SK-N-SH (cell line): ENCODE measurements at regions of chr11 and their contacts with region 1.

Region 1: GRCh38 chr11:114262681-114263512 is 33.3 kb upstream of the NNMT start:
- DNase-seq: peak; percentile 75
- H3K4me3 ChIP-seq: peak overlapping the region in 1 of 2 experiments; percentile 27; a peak in 1 of 4 replicates
- H3K27ac ChIP-seq: no peak overlapping the region
- H3K4me1 ChIP-seq: no peaks in the 10 kb centered on the region; a peak in 1 of 4 replicates
- H3K27me3 ChIP-seq: peaks cover 14% of the 10 kb centered on the region; the same call in 1 of the 2 replicates
- CTCF ChIP-seq: peak; percentile 73
- EP300 ChIP-seq: no peak
- RAD21 ChIP-seq: peak; percentile 95

Region 2: DNA sequence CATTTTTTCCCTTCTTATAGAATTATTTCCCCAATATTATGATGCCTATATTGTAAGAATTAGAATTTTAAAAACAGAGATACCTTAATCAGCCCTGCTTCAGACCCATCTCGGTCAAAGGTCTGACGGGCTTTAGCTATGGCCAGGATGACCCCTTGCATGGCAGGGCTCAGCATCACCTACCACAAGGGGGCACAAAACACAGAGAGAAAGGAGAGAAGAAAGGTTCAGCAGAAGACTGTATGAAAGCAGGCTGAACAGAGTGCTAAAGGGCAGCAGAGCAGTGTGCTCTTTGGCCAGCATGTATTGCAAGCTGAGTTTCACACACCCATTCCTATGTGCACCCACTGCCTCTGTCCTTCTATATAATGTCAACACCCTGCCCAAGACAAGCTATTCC is 456.5 kb before region 1 on chr11:
- CTCF ChIA-PET with region 1: interaction called, 25 read pairs
- POLR2A ChIA-PET with region 1: no interaction called
- DNase-seq: peak; percentile 33
- H3K4me3 ChIP-seq: no peak overlapping the region; a peak in 1 of 4 replicates
- H3K27ac ChIP-seq: no peak overlapping the region
- H3K4me1 ChIP-seq: peaks cover 0 to 2% of the 10 kb centered on the region in 2 experiments; a peak in 1 of 4 replicates
- H3K27me3 ChIP-seq: no peaks in the 10 kb centered on the region
- CTCF ChIP-seq: peak; percentile 53
- EP300 ChIP-seq: no peak
- RAD21 ChIP-seq: peak; percentile 33

Region 3: GRCh38 chr11:113952588-113952987 is 310.3 kb before region 1 on chr11:
- CTCF ChIA-PET with region 1: interaction called, 13 read pairs
- POLR2A ChIA-PET with region 1: no interaction called
- DNase-seq: no peak
- H3K4me3 ChIP-seq: no peak overlapping the region
- H3K27ac ChIP-seq: no peak overlapping the region
- H3K4me1 ChIP-seq: peaks cover 0 to 15% of the 10 kb centered on the region in 2 experiments; a peak in 1 of 4 replicates
- H3K27me3 ChIP-seq: no peaks in the 10 kb centered on the region
- CTCF ChIP-seq: no peak
- EP300 ChIP-seq: no peak
- RAD21 ChIP-seq: no peak

Region 4: GRCh38 chr11:114017723-114018122 is 245.2 kb before region 1 on chr11:
- CTCF ChIA-PET with region 1: interaction called, 445 read pairs
- POLR2A ChIA-PET with region 1: no interaction called
- DNase-seq: no peak
- H3K4me3 ChIP-seq: no peak overlapping the region
- H3K27ac ChIP-seq: no peak overlapping the region
- H3K4me1 ChIP-seq: no peaks in the 10 kb centered on the region
- H3K27me3 ChIP-seq: no peaks in the 10 kb centered on the region
- CTCF ChIP-seq: no peak
- EP300 ChIP-seq: no peak
- RAD21 ChIP-seq: no peak

Region 5: DNA sequence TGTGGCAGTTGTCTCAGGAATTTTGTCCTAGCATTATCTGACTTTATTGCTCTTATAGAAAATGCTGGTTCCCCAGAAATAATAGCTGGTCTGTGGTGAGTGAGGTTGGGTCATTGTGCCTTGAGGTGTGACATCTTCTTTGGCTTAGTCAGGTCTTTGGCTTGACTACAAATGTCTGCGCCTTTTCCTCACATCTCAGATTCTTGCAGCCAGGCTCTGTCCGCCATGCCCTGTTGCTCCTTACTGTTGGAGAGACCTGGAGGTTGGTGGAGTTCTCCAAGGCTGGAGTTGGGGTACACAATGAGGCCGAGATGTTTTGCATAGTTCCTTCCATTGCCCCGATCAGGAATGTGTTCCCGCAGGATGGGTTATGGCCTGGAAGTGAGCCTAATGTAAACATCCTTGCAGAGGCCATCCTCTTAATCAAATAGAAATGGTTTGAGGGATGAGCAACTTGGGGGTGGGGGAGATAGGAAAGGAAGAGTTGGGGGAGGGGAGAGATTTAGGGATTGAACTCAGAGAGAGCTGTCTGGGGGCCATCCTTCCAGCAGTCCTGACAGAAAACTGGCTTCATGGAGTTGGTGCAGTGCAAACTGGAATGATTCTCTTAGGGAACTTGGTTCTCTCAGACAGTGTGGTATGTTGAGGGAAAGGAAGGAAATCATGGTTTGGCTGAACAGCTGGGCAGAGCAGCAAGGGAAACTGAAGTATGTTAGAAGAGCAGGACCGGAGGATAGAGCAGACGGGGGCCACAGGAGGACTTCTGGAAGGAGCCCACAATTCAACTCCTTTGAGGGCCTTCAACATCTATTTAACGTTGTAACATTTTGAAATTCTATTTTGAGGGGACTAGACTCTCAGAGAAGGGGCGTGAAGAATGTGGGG is 153.4 kb before region 1 on chr11:
- CTCF ChIA-PET with region 1: interaction called, 10 read pairs
- POLR2A ChIA-PET with region 1: no interaction called
- DNase-seq: no peak
- H3K4me3 ChIP-seq: no peak overlapping the region
- H3K27ac ChIP-seq: no peak overlapping the region
- H3K4me1 ChIP-seq: no peaks in the 10 kb centered on the region
- H3K27me3 ChIP-seq: peaks cover 36% of the 10 kb centered on the region; the same call in 1 of the 2 replicates
- CTCF ChIP-seq: no peak
- EP300 ChIP-seq: no peak
- RAD21 ChIP-seq: no peak

Region 6: DNA sequence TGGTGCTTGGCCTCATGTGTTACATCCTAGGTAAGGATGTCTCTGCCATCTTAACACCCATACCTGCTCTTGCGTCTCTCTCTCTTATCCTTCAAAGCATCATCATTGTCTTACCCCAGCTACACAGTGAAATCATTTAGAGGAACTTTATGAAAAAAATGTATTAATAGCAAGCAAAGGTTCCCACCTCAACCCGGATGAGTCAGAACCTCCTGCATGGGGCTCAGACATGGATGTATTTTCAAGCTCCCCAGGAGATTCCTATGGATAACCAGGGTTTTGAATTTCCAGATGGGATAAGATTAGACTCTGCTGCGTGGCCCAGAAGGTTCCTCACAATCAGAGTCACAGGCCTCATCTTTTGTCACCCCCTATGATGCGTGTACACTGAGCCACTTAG is 55.8 kb before region 1 on chr11:
- CTCF ChIA-PET with region 1: interaction called, 14 read pairs
- POLR2A ChIA-PET with region 1: no interaction called
- DNase-seq: no peak
- H3K4me3 ChIP-seq: no peak overlapping the region
- H3K27ac ChIP-seq: no peak overlapping the region
- H3K4me1 ChIP-seq: no peaks in the 10 kb centered on the region
- H3K27me3 ChIP-seq: peaks cover 19% of the 10 kb centered on the region
- CTCF ChIP-seq: no peak
- EP300 ChIP-seq: no peak
- RAD21 ChIP-seq: no peak

Region 7: GRCh38 chr11:114250993-114251814 is 11.7 kb before region 1 on chr11:
- CTCF ChIA-PET with region 1: interaction called, 100 read pairs
- POLR2A ChIA-PET with region 1: no interaction called
- DNase-seq: peak; percentile 21
- H3K4me3 ChIP-seq: no peak overlapping the region
- H3K27ac ChIP-seq: no peak overlapping the region
- H3K4me1 ChIP-seq: no peaks in the 10 kb centered on the region
- H3K27me3 ChIP-seq: peaks cover 11% of the 10 kb centered on the region; the same call in 1 of the 2 replicates
- CTCF ChIP-seq: no peak
- EP300 ChIP-seq: no peak
- RAD21 ChIP-seq: no peak

Region 8: GRCh38 chr11:114384487-114384886 is 121.6 kb after region 1 on chr11:
- CTCF ChIA-PET with region 1: no interaction called
- POLR2A ChIA-PET with region 1: no interaction called
- DNase-seq: no peak
- H3K4me3 ChIP-seq: no peak overlapping the region
- H3K27ac ChIP-seq: no peak overlapping the region
- H3K4me1 ChIP-seq: peaks cover 0 to 6% of the 10 kb centered on the region in 2 experiments; a peak in 1 of 4 replicates
- H3K27me3 ChIP-seq: no peaks in the 10 kb centered on the region
- CTCF ChIP-seq: no peak
- EP300 ChIP-seq: no peak
- RAD21 ChIP-seq: no peak

Region 9: DNA sequence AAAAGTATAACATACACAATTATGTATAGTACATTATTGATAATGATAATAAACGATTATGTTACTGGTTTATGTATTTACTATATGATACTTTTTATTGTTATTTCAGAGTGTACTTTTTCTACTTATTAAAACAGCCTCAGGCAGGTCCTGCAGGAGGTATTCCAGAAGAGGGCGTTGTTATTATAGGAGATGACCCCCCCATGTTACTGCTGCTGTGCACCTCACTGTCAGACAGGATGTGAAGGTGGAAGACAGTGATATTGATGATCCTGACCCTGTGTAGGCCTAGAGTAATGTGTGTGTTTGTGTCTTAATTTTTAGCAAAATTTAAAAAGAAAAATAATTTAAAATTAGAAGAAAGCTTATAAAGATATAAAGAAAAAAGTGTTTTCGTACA is 234.0 kb after region 1 on chr11:
- CTCF ChIA-PET with region 1: no interaction called
- POLR2A ChIA-PET with region 1: no interaction called
- DNase-seq: no peak
- H3K4me3 ChIP-seq: no peak overlapping the region
- H3K27ac ChIP-seq: no peak overlapping the region
- H3K4me1 ChIP-seq: 0 out of 4 replicates have a peak, but pooled peaks cover 0 to 5% of the 10 kb centered on the region in 2 experiments
- H3K27me3 ChIP-seq: no peaks in the 10 kb centered on the region
- CTCF ChIP-seq: no peak
- EP300 ChIP-seq: no peak
- RAD21 ChIP-seq: no peak